ENCODE measurements at regions of chr1 and their contacts with region 1.

Region 1: DNA sequence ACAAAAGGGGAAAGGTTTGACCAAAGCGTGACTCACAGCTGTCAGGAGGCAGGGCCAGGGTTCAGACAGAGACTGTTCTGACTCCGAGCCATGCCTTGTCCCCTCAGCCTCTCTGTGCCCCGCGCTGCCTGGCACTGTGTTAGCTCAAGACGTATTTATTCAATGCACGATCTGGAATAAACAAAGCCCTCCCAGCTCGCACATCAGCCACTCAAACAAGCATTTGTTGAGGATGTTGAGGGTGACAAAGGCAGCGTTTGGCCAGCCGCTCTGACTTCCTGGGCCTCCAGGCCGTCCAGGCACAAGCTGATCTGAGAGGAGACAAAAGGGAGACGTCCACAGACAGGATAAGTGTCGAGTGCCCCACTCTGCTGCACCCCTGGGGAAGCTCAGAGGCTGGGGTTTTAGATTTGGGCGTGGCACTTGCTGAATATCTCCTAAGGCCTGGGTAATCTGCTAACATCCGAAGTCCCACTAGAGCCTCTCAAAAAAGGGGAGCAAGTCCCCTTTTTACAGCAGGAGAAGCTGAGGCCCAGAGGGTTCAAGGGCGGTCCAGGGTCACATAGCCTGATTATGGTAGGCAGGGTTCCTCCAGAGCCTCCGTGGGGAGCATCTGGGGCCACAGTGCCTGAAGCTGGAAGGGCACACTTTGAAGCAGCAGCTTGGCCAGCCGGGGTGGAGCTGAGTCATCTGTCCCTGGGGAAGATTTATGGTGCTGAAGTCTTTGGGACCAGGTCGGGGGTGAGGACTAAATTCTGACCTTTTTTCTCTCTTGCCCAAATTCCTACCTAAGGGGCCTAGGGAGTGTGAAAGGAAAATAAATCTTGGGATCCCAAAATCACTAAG is 95.9 kb downstream of the SPSB1 start:
- DNase-seq: no peak
- ATAC-seq: no peak

Region 2: DNA sequence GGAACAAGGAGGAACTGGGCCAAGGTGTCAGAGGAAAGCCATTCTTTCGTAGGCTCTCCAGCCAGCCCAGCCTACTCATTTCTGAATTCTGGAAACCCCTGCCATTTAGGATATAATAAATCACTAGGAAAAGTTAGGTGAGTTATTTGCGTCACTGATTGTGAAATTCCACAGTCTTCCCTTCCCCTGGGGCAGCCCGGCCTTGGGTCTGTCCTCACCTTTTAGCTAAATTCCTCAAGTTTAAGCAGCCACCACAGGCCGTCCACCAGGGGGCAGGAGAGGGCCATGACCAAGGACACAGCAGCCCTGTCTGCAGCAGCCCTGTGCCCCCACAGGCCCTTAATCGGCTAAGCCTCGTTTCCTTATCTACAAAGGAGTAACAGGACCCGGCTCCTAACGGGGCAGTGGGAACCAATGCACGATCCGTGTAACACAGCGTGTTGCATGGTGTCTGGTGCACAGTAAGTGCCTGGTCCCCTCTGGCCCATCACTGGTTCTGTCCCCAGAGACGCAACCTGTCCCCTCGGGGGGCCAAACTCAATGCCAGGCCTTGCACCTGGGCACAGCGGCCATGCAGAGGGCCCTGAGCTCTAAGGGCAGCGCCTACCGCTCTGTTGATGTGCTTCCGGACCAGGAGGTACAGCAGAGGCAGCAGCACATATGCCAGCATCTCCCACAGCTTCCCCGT is 277.7 kb before region 1 on chr1:
- intact Hi-C with region 1: no loop called
- DNase-seq: peak; percentile 95
- ATAC-seq: peak; percentile 75

Region 3: GRCh38 chr1:9234223-9235095 is 154.1 kb before region 1 on chr1 and contains the start of gene H6PD:
- intact Hi-C with region 1: no loop called
- DNase-seq: peak; percentile 95
- ATAC-seq: peak; percentile 83
- total RNA-seq, gene H6PD: 18.7 TPM

Region 4: DNA sequence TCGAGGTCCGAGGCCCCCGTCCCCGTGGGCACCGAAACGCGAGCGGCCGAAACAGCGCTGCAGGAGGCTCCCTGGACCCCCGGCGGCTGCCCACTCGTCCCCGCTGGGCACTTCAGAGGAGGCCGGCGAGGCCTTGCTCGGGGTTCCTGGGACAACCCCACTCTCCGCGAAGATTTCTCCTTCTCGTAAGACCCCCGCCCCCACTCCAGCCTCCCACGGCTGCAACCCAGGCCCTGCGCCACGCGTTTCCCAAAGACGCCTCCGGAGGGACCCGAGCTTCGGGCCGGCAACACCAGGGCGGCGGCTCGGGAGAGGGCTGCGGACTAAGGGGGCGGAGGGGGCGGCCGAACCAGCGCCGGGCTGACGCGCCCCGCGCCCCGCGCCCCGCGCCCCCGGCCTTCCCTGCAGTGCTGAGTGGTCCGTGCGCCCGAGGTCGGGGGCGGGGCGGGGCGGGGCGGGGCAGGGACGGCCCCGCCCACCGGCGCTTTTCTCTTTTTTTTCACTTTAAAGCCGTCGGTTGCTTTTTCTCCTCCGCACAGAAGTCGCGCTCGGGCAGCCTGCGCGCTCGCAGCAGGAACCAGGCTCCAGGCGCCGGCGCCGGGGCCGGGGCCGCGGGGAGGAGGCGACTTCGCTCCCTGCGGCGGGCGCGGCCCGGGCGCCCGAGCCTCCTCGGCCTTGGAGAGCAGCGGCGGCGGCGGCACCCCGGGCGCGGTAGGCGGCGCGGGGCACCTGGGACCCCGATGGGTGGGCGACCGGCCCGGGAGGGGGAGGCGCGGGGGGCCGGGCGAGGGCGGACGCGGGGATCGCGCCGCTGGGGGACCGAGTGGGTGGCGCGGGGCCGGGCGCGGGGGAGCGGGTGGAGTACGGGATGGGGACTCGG is 96.0 kb before region 1 on chr1 and contains the start of gene SPSB1:
- intact Hi-C with region 1: loop called (anchors 2 kb)
- DNase-seq: peak; percentile 82
- ATAC-seq: peak; percentile 75
- total RNA-seq, gene SPSB1: 16.5 TPM

Region 5: GRCh38 chr1:9428601-9429341 is 40.2 kb after region 1 on chr1:
- intact Hi-C with region 1: loop called (anchors 5 kb)
- DNase-seq: peak; percentile 99
- ATAC-seq: peak; percentile 97

Region 6: GRCh38 chr1:9466780-9467758 is 78.5 kb after region 1 on chr1:
- intact Hi-C with region 1: no loop called
- DNase-seq: no peak
- ATAC-seq: peak; percentile 90

Region 7: GRCh38 chr1:9539165-9539828 is 150.7 kb after region 1 on chr1 and contains the start of gene SLC25A33:
- intact Hi-C with region 1: no loop called
- DNase-seq: peak; percentile 98
- ATAC-seq: peak; percentile 99
- total RNA-seq, gene SLC25A33: 5.7 TPM